ENCODE measurements at regions of chr1 and their contacts with region 1.

Region 1: DNA sequence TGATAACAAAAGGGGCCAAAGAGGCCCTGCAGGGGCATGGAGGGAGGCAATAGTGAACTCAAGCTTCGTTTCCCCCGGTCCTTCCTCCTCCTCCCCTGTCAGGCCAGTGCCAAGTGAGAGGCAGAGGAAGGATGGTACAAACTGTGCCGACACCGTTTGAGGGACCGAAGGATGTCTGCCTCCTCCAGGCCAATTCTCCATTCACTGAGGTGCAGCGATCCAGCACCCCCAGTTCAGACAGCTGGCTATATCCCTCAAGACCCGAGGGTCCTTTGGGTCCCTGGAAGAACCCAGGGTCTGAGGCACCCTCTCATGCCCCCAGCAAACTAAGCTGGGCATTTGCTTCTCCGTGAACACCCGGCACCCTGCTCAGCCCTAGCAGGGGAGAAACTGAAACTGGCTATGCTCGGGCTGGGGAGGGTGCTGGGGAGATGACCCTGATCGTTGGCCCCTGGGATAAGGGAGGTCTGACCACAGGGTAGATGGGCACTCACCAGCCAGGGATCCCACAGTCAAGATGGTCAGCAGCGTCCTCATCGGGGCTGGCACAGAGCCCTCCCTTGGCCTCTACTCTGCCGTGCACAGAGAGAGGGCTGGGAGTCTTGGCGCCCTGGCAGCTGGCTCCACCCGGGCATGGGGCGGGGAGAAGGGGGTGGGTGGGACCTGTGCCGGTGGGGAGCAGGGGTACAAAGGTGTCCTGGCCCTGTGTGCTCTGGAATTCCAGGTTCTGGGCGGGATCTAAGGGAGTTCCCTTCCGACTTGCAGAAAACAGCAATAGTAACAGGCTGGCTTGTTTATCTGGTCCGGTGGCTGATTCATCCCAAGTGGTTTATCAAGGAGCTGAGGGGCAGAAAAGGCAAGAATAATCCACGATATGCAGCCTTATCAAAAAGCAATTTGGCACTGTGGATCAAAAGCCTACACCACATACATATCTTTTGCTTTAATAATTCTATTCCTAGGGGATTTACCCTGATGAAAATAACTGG is at the start of gene IL22RA1:
- DNase-seq: no peak
- ATAC-seq: peak; percentile 39
- H3K4me3 Mint-ChIP-seq: no peak within 1 kb of the TSS
- H3K27ac Mint-ChIP-seq: no peak within 1 kb of the TSS
- H3K4me1 Mint-ChIP-seq: no peaks in the 10 kb centered on the region
- H3K27me3 Mint-ChIP-seq: no peaks in the 10 kb centered on the region; the same call in 1 of the 2 replicates
- CTCF ChIP-seq: no peak
- total RNA-seq, gene IL22RA1: 0.14 to 0.28 TPM (median 0.25 TPM) in 3 replicates

Region 2: GRCh38 chr1:24321697-24322469 is 179.0 kb after region 1 on chr1:
- CTCF ChIA-PET with region 1: interaction called, 10 read pairs
- POLR2A ChIA-PET with region 1: no interaction called
- DNase-seq: peak; percentile 65
- ATAC-seq: peak; percentile 25
- H3K4me3 Mint-ChIP-seq: peak overlapping the region; percentile 86
- H3K27ac Mint-ChIP-seq: no peak overlapping the region
- H3K4me1 Mint-ChIP-seq: peaks cover 51% of the 10 kb centered on the region
- H3K27me3 Mint-ChIP-seq: peaks cover 46% of the 10 kb centered on the region
- CTCF ChIP-seq: no peak

Measured in WTC11 (cell line).